Vagina (tissue), 2 donors: ENCODE measurements at regions of chr2 and their contacts with region 1.

Region 1: GRCh38 chr2:76965772-76966171 is 556.4 kb downstream of the LRRTM4 start:
- DNase-seq: no peak
- H3K4me3 ChIP-seq: no peak overlapping the region
- H3K27ac ChIP-seq: no peak overlapping the region
- H3K4me1 ChIP-seq: no peaks in the 10 kb centered on the region
- H3K27me3 ChIP-seq: no peaks in the 10 kb centered on the region
- CTCF ChIP-seq: no peak
- POLR2A ChIP-seq: no peak

Region 2: DNA sequence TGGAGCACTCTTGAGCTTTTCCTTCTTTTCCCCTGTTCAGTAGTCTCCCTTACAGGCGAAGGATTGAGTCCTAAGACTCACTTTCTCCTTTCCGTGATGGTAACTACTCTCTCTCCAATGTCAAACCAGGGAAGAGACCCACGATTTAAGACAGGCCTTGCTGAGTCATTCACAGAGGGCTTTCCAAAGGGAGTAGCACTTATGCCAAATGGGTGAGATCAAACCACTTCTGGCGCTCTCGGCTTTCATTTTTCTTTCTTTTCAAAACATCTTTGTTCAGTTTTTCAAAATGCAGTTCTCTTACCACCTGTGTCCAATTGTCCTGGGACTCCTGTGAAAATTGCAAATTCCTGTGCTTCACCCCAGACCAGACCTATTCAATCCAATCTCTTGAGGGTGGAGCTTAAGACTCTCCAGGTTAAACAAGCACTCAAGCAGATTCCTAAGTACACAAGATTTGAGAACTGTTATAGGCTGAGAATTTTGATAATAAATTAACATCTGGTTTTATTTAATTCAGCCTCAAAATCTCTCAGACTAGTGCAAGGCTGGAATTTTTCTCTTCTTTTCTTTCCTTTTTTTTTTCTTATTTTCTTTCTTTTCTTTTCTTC is 1333.6 kb before region 1 on chr2:
- intact Hi-C with region 1: loop called (anchors 5 kb)
- DNase-seq: no peak
- H3K4me3 ChIP-seq: no peak overlapping the region
- H3K27ac ChIP-seq: peak overlapping the region; percentile 39
- H3K4me1 ChIP-seq: peaks cover 7% of the 10 kb centered on the region
- H3K27me3 ChIP-seq: no peaks in the 10 kb centered on the region
- CTCF ChIP-seq: no peak
- POLR2A ChIP-seq: no peak